ENCODE measurements at regions of chr17 and their contacts with region 1.

Region 1: GRCh38 chr17:82030470-82031302 is 792 bp upstream of the RAC3 start:
- DNase-seq: peak; percentile 83 to 85
- H3K4me3 ChIP-seq: peak overlapping the region in 1 of 3 donors; percentile 36
- H3K27ac ChIP-seq: peak overlapping the region in 1 of 3 donors; percentile 41
- H3K4me1 ChIP-seq: peaks cover 28 to 39% of the 10 kb centered on the region in 2 donors
- H3K27me3 ChIP-seq: no peaks in the 10 kb centered on the region
- CTCF ChIP-seq: peak; percentile 75 to 98 (median 94)
- POLR2A ChIP-seq: no peak

Region 2: DNA sequence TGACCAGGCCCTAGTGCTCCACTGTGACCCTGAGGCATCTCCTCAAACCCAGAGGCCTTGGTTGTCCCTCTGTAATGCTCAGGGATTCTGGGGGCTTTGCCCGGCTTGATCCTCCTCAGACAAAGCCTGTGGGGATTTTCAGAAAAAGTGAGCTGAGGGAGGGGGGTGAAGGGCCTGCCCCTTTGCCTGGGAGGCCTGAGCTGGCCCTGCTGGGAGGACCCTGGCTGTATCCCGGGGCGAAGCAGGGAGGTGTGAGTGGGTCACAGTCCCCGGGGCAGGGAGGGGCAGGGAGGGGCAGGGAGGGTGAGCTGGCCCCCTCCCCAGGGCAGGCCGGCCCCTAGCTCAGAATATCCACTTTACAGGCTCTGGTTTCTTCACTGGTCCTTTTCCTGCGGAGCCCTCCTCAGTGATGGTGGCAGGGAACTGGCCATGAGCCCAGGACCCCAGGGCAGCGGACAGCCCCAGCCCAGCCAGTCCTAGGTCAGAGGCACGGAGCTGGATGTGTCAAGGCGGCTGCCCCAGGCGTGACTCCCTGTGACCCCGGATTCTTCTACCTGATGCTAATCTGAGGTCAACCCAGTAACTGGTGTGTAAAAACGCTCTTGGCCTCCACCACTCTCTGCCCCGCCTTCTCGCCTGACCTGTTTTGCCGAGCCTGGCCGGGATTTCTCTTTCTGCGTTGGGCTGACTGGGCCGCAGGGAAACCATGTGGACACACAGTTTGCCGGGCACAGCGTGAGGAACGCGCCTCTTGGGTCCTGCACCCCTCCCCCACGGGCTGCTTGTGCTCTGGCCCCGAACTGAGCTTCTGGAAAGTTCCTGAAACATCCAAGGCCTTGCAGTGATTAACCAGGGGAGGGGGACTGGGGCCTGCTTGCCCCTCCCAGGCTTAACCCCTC is 73.1 kb after region 1 on chr17:
- intact Hi-C with region 1: loop called (anchors 5 kb)
- DNase-seq: peak; percentile 95 to 97
- H3K4me3 ChIP-seq: no peak overlapping the region
- H3K27ac ChIP-seq: peak overlapping the region; percentile 85 to 97 (median 86)
- H3K4me1 ChIP-seq: peaks cover 45 to 76% of the 10 kb centered on the region in 2 donors
- H3K27me3 ChIP-seq: no peaks in the 10 kb centered on the region
- CTCF ChIP-seq: no peak
- POLR2A ChIP-seq: peak in 1 of 2 donors; percentile 53

Measured in thyroid gland (tissue), 4 donors.